GM10248 (cell line): ENCODE measurements at regions of chr13 and their contacts with region 1.

Region 1: GRCh38 chr13:99386911-99387788 is 80.0 kb upstream of the GPR183 start:
- DNase-seq: peak; percentile 84
- CTCF ChIP-seq: peak; percentile 93

Region 2: GRCh38 chr13:99307648-99308339 is 79.4 kb before region 1 on chr13:
- CTCF ChIA-PET with region 1: interaction called, 14 read pairs
- POLR2A ChIA-PET with region 1: no interaction called
- DNase-seq: no peak
- CTCF ChIP-seq: no peak

Region 3: DNA sequence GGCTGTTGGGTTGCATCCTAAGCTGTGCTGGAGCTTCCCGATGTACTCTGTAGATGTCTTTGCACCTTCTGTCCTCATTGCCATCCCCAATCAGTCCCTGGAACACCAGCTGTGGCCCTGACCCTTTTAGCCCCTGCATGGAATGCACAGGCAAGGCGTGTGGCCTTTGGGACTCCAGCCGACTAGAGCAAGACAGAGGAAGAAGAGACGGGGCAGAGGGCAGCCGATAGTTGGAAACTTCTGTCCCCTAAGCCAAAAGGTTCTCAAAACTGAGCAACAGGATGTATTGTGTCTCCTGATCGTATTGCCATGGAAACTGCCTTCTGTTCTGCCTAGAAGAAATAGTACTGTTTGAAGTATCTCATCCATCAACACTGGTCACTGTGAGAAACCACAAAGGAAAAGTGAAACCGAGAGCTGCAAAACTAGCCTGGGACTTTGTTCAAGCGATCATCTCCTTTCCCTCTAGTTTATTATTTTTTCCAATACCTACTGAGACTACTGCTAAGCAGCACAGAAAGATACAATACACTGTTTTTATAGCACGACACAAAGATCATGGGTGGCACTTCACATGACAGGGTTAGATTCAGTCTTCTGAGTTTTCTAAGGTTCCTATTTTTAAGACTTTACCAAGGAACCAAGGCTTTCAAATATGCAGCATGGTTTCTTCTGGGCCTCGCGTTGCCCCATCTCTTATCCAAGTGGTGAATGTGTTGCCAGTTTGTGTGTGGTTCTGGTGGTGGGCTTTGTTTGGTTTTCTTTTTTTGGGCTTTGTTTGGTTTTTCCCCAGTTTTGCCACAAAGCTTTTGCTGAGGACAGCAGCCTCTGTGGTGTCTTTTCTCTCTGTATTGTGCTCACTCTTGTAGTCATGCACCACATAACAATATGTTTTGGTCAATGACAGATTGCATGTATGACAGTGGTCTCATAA is 30.7 kb before region 1 on chr13:
- CTCF ChIA-PET with region 1: interaction called, 11 read pairs
- POLR2A ChIA-PET with region 1: no interaction called
- DNase-seq: peak; percentile 75
- CTCF ChIP-seq: no peak

Region 4: DNA sequence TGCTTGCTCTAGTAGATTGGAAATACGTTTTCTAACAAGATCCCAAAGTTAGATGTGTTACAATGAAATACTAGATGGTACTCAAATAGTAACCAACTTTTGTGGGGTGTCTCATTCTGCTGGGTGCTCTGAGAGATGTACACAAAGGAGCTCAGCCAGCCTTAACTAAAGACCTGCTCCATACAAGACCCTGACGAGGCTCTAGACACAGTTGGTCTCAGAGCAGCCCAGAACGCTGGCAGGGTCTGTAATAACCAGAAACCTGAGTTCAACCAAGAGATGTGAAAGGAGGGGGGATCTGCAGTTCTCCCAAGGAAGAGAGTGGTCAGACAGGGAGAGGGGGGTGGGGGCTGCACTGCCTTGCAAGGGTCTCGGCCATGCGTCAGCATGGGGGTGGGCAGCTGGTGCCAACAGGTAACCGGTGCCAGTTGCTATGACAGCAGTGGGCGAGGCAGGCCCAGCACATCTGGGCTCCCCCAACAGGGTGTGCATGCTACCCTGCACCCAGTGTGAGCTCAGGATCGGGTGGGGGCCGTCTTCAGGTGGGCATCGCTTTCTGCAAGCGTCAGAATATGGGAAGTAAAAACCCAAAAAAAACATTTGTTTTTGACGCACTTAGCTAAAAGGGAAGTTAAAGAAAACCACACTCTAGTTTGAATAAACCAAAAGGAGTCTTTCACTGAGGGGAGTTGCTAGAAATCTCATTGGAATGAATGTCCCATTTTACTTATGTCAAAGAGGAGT is 12.0 kb before region 1 on chr13:
- CTCF ChIA-PET with region 1: interaction called, 58 read pairs
- POLR2A ChIA-PET with region 1: no interaction called
- DNase-seq: peak; percentile 57
- CTCF ChIP-seq: no peak

Region 5: GRCh38 chr13:99417201-99418102 is 30.3 kb after region 1 on chr13:
- CTCF ChIA-PET with region 1: interaction called, 86 read pairs
- POLR2A ChIA-PET with region 1: no interaction called
- DNase-seq: no peak
- CTCF ChIP-seq: no peak

Region 6: DNA sequence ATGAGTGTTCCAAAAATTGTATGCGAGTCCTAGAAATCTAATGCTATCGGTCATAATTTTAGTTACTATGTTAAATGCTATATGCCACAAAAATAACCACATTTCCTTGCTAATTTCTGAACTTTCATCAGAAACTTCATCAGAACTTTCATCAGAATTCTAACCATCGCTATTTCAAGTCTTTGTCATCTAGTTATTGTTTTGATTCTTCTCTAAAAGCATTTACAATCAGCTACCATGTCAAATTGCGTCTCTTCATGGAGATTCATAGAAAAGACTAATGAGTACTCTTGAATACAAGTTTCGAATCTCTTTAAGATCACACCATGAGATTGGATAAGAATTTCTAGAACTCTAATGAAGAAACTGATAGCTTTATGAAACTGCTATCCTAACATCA is 61.4 kb after region 1 on chr13:
- CTCF ChIA-PET with region 1: interaction called, 10 read pairs
- POLR2A ChIA-PET with region 1: no interaction called
- DNase-seq: no peak
- CTCF ChIP-seq: no peak